ENCODE measurements at regions of chr14 and their contacts with region 1.

Region 1: GRCh38 chr14:70780396-70781075 is 28.8 kb downstream of the MAP3K9 start:
- DNase-seq: peak; percentile 61
- CTCF ChIP-seq: no peak

Region 2: DNA sequence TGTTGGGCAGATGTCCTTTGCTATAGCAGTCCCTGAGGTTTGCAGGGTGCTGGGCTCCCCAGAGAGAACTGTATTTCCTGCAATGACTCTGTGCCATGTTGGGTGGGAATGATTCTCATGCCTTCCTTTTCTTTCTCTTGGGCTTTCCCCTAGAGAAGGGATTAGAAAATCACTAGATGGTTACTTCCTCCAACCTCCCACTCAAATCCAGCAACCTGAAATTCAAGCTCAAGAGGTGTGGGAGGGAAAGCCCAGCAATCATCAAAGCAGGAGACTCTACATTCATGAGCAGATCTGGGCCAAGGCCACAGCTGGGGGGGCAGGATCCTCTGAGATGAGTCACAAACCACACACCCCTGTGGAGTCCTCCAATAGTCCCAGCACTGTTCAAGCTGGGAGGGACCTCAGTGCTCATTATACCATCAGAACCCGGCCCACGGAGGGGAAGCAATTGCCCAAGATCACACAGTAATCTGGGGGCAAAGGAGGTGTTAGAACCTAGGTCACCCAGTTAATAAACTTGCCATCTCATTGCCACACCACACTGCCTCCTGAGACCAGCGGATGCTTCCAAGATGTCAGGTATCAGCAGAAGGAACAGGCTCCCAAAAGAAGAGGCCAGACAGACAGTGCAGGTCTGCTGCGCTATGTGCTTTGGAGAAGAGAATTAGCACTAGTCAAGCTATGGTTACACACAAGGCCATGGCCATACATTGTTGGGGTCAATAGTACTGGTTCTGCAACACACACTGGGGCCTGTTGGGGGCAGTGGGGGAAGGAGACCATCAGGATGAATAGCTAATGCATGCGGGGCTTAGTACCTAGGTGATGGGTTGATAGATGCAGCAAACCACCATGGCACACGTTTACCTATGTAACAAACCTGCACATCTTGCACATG is 73.1 kb before region 1 on chr14:
- CTCF ChIA-PET with region 1: no interaction called
- POLR2A ChIA-PET with region 1: no interaction called
- DNase-seq: peak; percentile 61
- CTCF ChIP-seq: no peak

Region 3: DNA sequence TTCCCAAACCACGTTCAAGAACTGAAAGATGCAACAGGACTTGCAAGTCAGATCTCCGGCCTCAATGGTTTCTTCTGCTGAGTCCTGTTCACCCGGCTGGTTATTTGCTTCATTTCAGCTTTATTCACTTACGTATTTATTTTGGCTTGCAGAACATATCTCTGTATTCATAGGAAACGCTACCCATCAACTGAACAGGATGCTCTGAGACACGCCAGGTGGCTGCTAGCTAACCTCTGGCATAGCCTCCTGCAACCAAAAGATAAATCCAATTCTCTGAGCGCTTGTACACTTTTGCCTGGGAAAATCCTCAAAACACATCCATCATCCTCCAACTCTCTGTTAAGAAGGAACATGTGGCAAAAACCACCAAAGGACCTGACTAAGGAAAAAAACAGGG is 11.4 kb after region 1 on chr14:
- CTCF ChIA-PET with region 1: interaction called, 10 read pairs
- POLR2A ChIA-PET with region 1: interaction called, 3 read pairs
- DNase-seq: no peak
- CTCF ChIP-seq: no peak

Region 4: DNA sequence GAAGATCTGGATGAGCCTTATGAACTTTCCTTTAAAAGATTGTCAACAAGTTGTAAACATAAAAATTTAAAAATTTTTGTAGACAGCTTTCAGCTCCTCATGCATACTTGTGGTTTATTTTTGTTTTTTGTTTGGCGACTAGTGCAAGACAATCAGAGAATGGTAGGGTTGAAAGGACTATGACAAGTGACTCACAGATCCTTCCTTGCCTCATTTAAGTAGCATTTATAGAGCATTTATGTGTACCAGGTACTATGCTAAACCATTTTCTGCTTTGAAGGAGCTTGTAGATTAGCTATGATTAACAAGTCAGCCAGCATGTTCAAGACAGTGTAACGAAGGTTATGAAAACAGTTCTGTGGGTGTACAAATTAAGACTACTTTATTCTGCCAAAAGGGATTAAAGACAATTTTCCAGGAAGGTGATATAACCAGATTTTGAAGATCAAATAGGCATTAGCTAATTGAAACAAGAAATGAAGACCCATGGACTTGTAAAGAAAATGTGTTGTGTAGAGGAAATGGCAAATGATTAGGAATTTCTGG is 248.8 kb after region 1 on chr14:
- CTCF ChIA-PET with region 1: no interaction called
- POLR2A ChIA-PET with region 1: no interaction called
- DNase-seq: no peak
- CTCF ChIP-seq: no peak

Region 5: DNA sequence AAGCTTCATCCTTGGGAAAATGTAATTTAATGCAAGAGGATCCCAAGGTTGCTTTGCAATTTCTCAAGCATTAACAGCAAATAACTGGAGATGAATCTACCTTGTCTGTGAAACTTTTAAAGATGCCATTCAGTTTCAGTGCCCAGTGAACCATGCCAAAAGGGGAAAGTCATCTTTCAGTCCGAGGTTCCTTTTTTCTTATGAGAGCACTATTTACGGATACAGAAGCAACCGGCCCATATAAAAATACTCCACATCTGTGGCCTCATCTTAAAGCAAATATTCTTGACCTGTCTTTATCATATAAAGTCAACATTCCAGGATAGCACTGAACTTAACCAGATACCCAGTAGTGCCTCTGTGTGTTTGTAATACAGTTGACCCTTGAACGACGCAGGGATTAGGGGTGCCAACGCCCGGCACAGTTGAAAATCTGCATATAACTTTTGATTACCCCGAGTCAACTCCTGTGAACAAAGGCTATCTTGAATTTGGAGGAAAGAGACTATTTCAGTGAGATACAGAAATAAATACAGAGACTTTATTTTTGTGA is 336.1 kb after region 1 on chr14:
- CTCF ChIA-PET with region 1: no interaction called
- POLR2A ChIA-PET with region 1: no interaction called
- DNase-seq: peak; percentile 34
- CTCF ChIP-seq: no peak